Activated B cell treated with CpG ODN at 0.5 μM for 24 hours (primary cell): ENCODE measurements at regions of chr1 and their contacts with region 1.

Region 1: GRCh38 chr1:161132410-161133219 is at the start of gene DEDD:
- DNase-seq: peak; percentile 88
- ATAC-seq: peak; percentile 92
- H3K4me3 Mint-ChIP-seq: no peak within 1 kb of the TSS
- H3K27ac Mint-ChIP-seq: no peak within 1 kb of the TSS
- H3K4me1 Mint-ChIP-seq: peaks cover 33% of the 10 kb centered on the region
- H3K27me3 Mint-ChIP-seq: no peaks in the 10 kb centered on the region
- CTCF ChIP-seq: no peak
- total RNA-seq, gene DEDD: 39.5 and 40.5 TPM in 2 replicates

Region 2: GRCh38 chr1:160070243-160071163 is 1062.1 kb before region 1 on chr1:
- CTCF ChIA-PET with region 1: no interaction called
- POLR2A ChIA-PET with region 1: no interaction called
- intact Hi-C with region 1: no loop called
- DNase-seq: peak; percentile 62
- ATAC-seq: peak; percentile 99
- H3K4me3 Mint-ChIP-seq: peak overlapping the region; percentile 90
- H3K27ac Mint-ChIP-seq: no peak overlapping the region
- H3K4me1 Mint-ChIP-seq: peaks cover 7% of the 10 kb centered on the region
- H3K27me3 Mint-ChIP-seq: peaks cover 50% of the 10 kb centered on the region
- CTCF ChIP-seq: no peak

Region 3: GRCh38 chr1:160837558-160838205 is 294.9 kb before region 1 on chr1:
- CTCF ChIA-PET with region 1: interaction called, 4 read pairs
- POLR2A ChIA-PET with region 1: interaction called, 4 read pairs
- intact Hi-C with region 1: loop called (anchors 2 kb)
- DNase-seq: peak; percentile 66
- ATAC-seq: peak; percentile 97
- H3K4me3 Mint-ChIP-seq: no peak overlapping the region
- H3K27ac Mint-ChIP-seq: peak overlapping the region; percentile 84
- H3K4me1 Mint-ChIP-seq: peaks cover 36% of the 10 kb centered on the region
- H3K27me3 Mint-ChIP-seq: no peaks in the 10 kb centered on the region
- CTCF ChIP-seq: no peak

Region 4: DNA sequence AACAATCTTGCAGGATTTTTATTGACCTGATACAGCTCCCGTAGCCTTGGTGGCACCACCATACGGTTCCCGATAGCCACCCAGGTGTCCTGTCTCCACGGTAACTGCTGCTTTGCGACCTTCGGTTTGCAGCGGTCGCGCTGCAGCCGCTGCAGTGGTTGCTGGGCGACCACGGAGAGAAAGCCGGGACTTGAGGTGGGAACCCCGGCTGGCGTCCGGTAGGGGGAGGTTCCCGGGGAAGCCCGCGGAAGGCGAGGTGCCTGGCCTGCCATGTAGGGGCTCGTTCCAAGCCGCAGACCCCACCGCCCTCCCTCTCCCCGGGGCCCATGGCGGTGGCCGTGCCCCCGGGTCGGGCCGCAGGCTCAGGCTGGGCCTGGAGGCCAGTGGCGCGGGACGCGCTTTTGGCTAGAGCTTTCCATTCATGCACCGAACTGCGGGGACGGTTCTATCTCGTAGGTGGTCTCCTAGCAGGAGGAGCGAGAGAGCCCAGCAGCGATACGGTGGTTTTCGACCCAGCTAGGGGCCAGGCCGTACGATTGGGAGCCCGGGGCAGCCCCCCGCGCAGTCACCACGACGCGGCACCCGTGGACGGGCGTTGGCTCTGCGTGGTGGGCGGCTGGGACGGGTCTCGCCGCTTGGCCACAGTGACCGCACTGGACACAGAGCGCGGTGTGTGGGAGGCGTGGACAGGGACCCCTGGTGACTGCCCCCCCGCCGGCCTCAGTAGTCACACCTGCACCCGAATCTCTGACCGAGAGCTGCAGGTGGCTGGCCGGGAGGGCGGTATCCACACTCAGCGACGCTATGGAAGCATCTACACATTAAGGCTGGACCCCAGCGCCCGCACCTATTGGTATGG is 34.2 kb before region 1 on chr1 and contains the start of gene KLHDC9:
- CTCF ChIA-PET with region 1: interaction called, 6 read pairs
- POLR2A ChIA-PET with region 1: interaction called, 29 read pairs
- intact Hi-C with region 1: loop called (anchors 1 kb)
- DNase-seq: peak; percentile 77
- ATAC-seq: peak; percentile 79
- H3K4me3 Mint-ChIP-seq: peak within 1 kb of the TSS; percentile 88
- H3K27ac Mint-ChIP-seq: peak within 1 kb of the TSS; percentile 93
- H3K4me1 Mint-ChIP-seq: peaks cover 36% of the 10 kb centered on the region
- H3K27me3 Mint-ChIP-seq: no peaks in the 10 kb centered on the region
- CTCF ChIP-seq: peak; percentile 11
- total RNA-seq, gene KLHDC9: 2.9 and 3.6 TPM in 2 replicates

Region 5: DNA sequence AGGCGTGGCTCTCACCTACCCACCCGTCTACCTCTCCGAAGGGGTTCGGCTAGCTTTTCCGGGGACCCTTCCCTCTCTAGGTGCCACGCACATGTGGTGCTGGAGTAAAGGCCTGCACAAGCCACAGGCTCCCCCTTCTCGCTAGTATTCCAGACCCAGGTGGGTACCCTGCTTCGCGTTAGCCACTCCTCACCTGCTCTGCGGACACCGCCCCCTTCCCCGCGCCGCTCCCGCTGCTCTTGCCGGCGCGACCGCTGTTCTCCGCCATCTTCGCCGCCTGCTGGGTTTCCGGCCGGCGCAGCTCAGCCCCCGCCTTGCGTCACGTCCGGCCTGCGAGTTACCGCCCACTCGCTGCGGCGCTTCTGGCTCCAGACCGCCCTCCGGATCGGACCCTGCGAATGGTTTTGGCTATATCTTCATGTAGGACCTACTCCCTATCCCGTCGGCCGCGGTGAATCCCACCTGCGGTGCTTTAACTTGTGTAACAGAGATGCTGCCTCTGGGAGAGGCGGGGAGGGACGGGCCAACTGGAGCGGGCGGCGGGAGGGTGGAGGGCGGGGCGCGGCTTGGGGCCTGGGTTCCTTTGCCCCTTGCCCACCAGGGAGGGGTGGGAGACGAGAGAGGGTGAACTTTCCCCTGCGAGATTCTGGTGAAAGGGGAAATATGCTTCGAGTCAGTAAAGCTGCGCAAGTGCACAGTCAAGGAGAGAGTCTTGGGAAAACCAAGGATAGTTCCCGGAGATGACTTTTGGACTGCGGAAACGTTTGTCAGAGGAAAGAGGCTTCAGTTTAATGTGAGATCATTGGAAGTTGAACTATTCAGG is 14.6 kb before region 1 on chr1 and contains the starts of genes NIT1 and PFDN2:
- CTCF ChIA-PET with region 1: interaction called, 7 read pairs
- POLR2A ChIA-PET with region 1: interaction called, 31 read pairs
- intact Hi-C with region 1: loop called (anchors 1 kb)
- DNase-seq: peak; percentile 84
- ATAC-seq: peak; percentile 77
- H3K4me3 Mint-ChIP-seq: peak within 1 kb of the TSS; percentile 92
- H3K27ac Mint-ChIP-seq: peak within 1 kb of the TSS; percentile 89
- H3K4me1 Mint-ChIP-seq: peaks cover 87% of the 10 kb centered on the region
- H3K27me3 Mint-ChIP-seq: no peaks in the 10 kb centered on the region
- CTCF ChIP-seq: no peak
- total RNA-seq, gene NIT1: 40.5 and 43.9 TPM in 2 replicates
- total RNA-seq, gene PFDN2: 43.8 and 67.9 TPM in 2 replicates

Region 6: GRCh38 chr1:161153679-161154426 is 21.2 kb after region 1 on chr1 and contains the start of gene UFC1:
- CTCF ChIA-PET with region 1: no interaction called
- POLR2A ChIA-PET with region 1: interaction called, 23 read pairs
- intact Hi-C with region 1: loop called (anchors 1 kb)
- DNase-seq: peak; percentile 66
- ATAC-seq: peak; percentile 94
- H3K4me3 Mint-ChIP-seq: peak within 1 kb of the TSS; percentile 99
- H3K27ac Mint-ChIP-seq: peak within 1 kb of the TSS; percentile 100
- H3K4me1 Mint-ChIP-seq: peaks cover 21% of the 10 kb centered on the region
- H3K27me3 Mint-ChIP-seq: no peaks in the 10 kb centered on the region
- CTCF ChIP-seq: no peak
- total RNA-seq, gene UFC1: 107 and 127 TPM in 2 replicates

Region 7: GRCh38 chr1:161165742-161166668 is 33.4 kb after region 1 on chr1 and contains the start of gene PPOX:
- CTCF ChIA-PET with region 1: interaction called, 3 read pairs
- POLR2A ChIA-PET with region 1: interaction called, 7 read pairs
- intact Hi-C with region 1: loop called (anchors 1 kb)
- DNase-seq: peak; percentile 82
- ATAC-seq: peak; percentile 94
- H3K4me3 Mint-ChIP-seq: peak within 1 kb of the TSS; percentile 88
- H3K27ac Mint-ChIP-seq: peak within 1 kb of the TSS; percentile 98
- H3K4me1 Mint-ChIP-seq: peaks cover 48% of the 10 kb centered on the region
- H3K27me3 Mint-ChIP-seq: no peaks in the 10 kb centered on the region
- CTCF ChIP-seq: no peak
- total RNA-seq, gene PPOX: 31.5 and 40.7 TPM in 2 replicates

Region 8: GRCh38 chr1:161177112-161177935 is 44.7 kb after region 1 on chr1 and contains the start of gene B4GALT3:
- CTCF ChIA-PET with region 1: no interaction called
- POLR2A ChIA-PET with region 1: interaction called, 11 read pairs
- intact Hi-C with region 1: loop called (anchors 1 kb)
- DNase-seq: peak; percentile 99
- ATAC-seq: peak; percentile 90
- H3K4me3 Mint-ChIP-seq: peak within 1 kb of the TSS; percentile 99
- H3K27ac Mint-ChIP-seq: peak within 1 kb of the TSS; percentile 99
- H3K4me1 Mint-ChIP-seq: peaks cover 64% of the 10 kb centered on the region
- H3K27me3 Mint-ChIP-seq: no peaks in the 10 kb centered on the region
- CTCF ChIP-seq: no peak
- total RNA-seq, gene B4GALT3: 40.7 and 41.7 TPM in 2 replicates